ENCODE measurements at regions of chr11 and their contacts with region 1.

Region 1: DNA sequence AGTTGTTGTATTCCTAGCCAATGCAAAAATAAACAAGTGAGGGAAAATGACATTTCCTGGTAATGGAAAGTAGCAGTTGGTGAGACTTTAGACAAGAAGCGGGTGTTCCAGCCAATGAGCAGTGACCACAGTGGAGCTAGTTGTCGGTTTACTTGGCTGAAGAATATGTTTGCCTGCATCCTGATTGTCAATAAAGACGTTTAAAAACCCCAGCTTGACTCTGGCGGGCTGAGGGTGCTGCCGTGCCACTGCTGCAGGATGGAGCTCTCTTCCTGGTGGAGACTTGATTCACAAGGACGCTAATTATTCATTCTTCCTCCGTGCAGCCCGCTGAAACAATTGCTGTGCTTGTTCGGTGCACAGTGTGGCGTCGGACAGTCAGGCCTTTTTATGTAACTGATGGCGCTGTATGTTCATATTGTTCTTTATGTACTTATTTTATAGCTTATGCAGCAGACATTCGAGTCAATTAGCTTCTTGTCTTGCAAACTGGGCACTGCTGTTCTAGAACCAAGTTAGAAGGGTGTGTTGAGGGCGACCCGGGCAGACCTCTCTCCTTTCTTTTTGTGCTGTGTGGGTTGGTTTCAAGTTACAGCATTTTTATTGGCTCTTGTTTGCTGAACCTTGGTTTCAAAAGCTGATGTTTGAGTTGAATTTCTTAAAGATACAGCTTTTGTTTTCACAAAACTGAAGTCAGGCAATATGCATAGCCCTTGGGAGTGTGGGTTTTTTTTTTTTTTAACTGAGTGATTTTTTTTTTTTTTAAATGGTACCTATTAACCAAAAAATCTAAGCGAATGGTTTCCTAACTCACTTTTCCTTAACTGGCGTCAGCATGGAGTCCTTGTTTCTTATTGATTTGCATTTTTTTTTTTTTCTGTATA is 153.9 kb downstream of the TEAD1 start:
- DNase-seq: peak; percentile 47
- H3K4me3 Mint-ChIP-seq: peak overlapping the region; percentile 79
- H3K27ac Mint-ChIP-seq: peak overlapping the region; percentile 89
- H3K4me1 Mint-ChIP-seq: peaks cover 67% of the 10 kb centered on the region
- H3K27me3 Mint-ChIP-seq: no peaks in the 10 kb centered on the region
- CTCF ChIP-seq: no peak

Region 2: DNA sequence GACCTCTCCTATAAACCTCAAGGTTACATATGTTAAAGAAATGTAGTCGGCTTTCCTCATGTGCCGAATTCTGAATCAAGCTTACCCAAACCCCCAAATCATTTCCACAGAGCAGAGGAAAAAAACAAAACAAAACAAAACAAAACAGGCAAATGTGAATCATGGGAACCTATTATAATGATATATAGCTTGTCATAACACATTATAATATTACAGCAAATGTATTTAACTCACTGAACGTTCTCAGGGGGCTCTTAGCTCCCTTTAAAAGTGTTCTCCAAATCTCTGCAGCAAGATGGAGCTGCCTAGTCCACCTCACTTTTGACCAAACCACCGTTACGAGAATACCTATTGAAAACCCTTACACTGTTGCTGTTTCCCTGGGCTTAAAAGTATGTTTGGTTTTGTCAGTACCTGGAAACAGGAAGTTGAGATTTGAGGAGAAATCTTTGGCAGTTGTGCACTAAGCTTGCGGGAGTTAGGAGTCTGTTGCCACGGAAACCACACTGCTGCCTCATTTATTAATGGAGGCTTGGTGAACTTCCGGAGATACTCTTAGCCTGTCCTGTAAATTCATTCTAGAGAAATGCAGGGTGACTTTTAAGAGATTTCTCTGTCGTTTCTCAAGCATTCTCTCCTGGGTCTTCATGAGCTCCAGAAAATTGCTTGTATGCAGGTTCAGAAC is 13.9 kb after region 1 on chr11:
- CTCF ChIA-PET with region 1: interaction called, 13 read pairs
- intact Hi-C with region 1: no loop called
- DNase-seq: peak; percentile 37
- H3K4me3 Mint-ChIP-seq: no peak overlapping the region
- H3K27ac Mint-ChIP-seq: peak overlapping the region; percentile 28
- H3K4me1 Mint-ChIP-seq: peaks cover 70% of the 10 kb centered on the region
- H3K27me3 Mint-ChIP-seq: no peaks in the 10 kb centered on the region
- CTCF ChIP-seq: no peak

Region 3: DNA sequence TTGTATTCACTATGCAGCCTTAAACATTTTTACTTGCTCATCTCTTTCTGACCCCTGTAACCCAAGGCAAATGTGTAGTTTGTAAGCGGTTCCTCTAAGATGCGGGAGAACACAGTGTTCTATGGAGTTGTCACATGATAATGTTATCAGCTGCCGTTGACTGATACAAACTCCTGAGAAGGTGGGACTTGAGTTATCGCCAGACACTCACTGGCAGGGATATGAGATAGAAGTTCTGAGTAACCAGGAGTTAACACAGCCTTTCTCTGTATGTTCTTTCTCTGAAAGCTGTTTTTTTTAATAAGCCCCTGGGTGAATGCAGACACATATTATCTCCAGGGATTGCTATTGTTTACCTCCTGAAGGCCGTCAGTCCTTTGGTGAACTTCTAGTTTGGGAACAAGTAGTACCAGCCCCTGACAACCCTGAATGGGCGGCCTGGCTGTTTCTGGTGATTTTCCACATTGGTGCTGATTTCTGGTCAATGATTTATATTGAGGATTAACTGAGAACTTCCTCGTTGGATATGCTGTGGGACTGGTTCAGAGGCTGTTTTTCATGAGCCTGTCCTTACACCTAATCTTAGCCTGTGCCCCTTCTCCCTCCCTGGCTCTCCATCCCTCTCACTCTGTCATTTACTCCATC is 25.6 kb after region 1 on chr11:
- CTCF ChIA-PET with region 1: interaction called, 4 read pairs
- intact Hi-C with region 1: loop called (anchors 1 kb)
- DNase-seq: peak; percentile 49
- H3K4me3 Mint-ChIP-seq: peak overlapping the region; percentile 36
- H3K27ac Mint-ChIP-seq: peak overlapping the region; percentile 88
- H3K4me1 Mint-ChIP-seq: peaks cover 70% of the 10 kb centered on the region
- H3K27me3 Mint-ChIP-seq: no peaks in the 10 kb centered on the region
- CTCF ChIP-seq: no peak

Region 4: GRCh38 chr11:12871788-12872321 is 43.7 kb after region 1 on chr11:
- CTCF ChIA-PET with region 1: no interaction called
- intact Hi-C with region 1: no loop called
- DNase-seq: no peak
- H3K4me3 Mint-ChIP-seq: no peak overlapping the region
- H3K27ac Mint-ChIP-seq: no peak overlapping the region
- H3K4me1 Mint-ChIP-seq: no peaks in the 10 kb centered on the region
- H3K27me3 Mint-ChIP-seq: no peaks in the 10 kb centered on the region
- CTCF ChIP-seq: no peak